Activated CD8-positive, alpha-beta T cell treated with anti-CD3 and anti-CD28 coated beads for 36 hours (primary cell): ENCODE measurements at regions of chr17 and their contacts with region 1.

Region 1: DNA sequence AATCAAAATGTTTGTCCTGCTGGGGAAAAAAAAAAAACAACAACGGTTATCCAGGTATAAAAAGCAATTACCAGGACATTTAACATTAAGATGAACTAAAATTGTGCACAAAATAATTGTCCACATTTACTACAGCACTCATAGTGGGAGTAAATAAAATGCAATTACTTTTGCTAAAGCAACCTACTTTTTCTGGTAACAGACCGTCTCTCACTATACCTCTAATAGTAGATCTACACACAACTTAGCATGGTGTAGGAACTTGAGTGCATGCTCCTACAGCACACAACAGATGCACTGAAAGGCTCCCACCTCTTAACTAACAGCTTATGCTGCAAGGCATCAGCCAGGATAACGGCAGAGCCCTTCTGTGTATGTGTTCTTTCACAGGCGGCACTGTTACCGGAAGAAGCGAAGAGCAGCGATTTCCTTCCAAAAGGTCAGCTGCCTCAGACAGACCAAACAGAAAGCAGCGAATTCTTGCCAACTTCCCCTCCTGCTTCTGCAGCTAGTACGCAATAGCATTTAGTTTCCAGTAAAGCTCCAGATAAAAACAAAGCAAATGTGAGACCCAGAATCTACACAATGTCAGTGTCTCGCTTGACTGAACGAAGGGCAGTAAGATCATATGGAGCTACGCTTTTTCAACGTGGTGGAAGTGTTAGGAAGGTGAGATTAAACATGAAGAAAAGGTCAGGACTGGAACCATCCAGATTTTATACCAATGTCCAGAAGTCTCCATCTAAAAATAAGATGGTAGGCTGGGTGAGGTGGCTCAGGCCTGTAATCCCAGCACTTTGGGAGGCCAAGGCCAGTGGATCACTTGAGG is 27.6 kb downstream of the STAT5B start:
- DNase-seq: peak; percentile 88
- ATAC-seq: peak; percentile 86
- H3K4me3 Mint-ChIP-seq: peak overlapping the region; percentile 77
- H3K27ac Mint-ChIP-seq: peak overlapping the region; percentile 98
- H3K4me1 Mint-ChIP-seq: peaks cover 69% of the 10 kb centered on the region
- H3K27me3 Mint-ChIP-seq: no peaks in the 10 kb centered on the region
- CTCF ChIP-seq: no peak

Region 2: DNA sequence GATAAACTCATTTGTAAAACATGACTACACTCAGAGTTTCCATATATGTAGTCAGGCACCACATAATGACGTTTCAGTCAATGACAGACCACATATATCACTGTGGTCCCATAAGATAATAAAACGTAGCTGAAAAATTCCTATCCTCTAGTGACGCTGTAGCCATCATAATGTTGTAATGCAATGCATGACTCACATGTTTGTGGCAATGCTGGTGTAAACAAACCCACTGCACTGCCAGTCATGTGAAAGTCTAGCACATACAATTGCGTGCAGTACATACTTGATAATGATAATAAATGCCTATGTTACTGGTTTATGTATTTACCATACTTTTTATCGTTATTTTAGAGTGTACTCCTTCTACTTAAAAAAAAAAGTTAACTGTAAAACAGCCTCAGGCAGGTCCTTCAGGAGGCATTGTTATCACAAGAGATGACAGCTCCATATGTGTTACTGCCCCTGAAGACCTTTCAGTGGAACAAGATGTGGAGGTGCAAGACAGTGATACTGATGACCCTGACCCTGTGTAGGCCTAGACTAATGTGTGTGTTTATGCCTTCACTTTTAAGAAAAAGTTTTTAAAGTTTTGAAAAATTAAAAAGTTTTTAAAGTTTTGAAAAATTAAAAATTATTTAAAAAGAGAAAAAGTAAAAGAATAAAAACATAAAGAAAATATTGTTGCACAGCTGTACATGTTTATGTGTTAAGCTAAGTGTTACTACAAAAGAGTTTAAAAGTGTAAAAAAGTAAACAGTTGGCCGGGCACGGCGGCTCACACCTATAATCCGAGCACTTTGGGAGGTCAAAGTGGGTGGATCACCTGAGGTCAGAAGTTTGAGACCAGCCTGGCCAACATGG is 18.6 kb after region 1 on chr17:
- CTCF ChIA-PET with region 1: interaction called, 25 read pairs
- POLR2A ChIA-PET with region 1: interaction called, 136 read pairs
- intact Hi-C with region 1: loop called (anchors 2 kb)
- DNase-seq: peak; percentile 74
- ATAC-seq: peak; percentile 85
- H3K4me3 Mint-ChIP-seq: peak overlapping the region; percentile 27
- H3K27ac Mint-ChIP-seq: peak overlapping the region; percentile 96
- H3K4me1 Mint-ChIP-seq: peaks cover 61% of the 10 kb centered on the region
- H3K27me3 Mint-ChIP-seq: no peaks in the 10 kb centered on the region
- CTCF ChIP-seq: no peak

Region 3: GRCh38 chr17:42276359-42276608 is 27.7 kb after region 1 on chr17 and contains the start of gene STAT5B:
- CTCF ChIA-PET with region 1: interaction called, 14 read pairs
- POLR2A ChIA-PET with region 1: interaction called, 136 read pairs
- intact Hi-C with region 1: no loop called
- DNase-seq: peak; percentile 64
- ATAC-seq: peak; percentile 65
- H3K4me3 Mint-ChIP-seq: peak within 1 kb of the TSS; percentile 97
- H3K27ac Mint-ChIP-seq: peak within 1 kb of the TSS; percentile 96
- H3K4me1 Mint-ChIP-seq: peaks cover 40% of the 10 kb centered on the region
- H3K27me3 Mint-ChIP-seq: no peaks in the 10 kb centered on the region
- CTCF ChIP-seq: no peak
- total RNA-seq, gene STAT5B: 128 to 129 TPM

Region 4: GRCh38 chr17:42287926-42288802 is 39.6 kb after region 1 on chr17 and contains the start of gene STAT5A:
- CTCF ChIA-PET with region 1: interaction called, 4 read pairs
- POLR2A ChIA-PET with region 1: interaction called, 49 read pairs
- intact Hi-C with region 1: no loop called
- DNase-seq: peak; percentile 90
- ATAC-seq: peak; percentile 76
- H3K4me3 Mint-ChIP-seq: peak within 1 kb of the TSS; percentile 84
- H3K27ac Mint-ChIP-seq: peak within 1 kb of the TSS; percentile 94
- H3K4me1 Mint-ChIP-seq: peaks cover 54% of the 10 kb centered on the region
- H3K27me3 Mint-ChIP-seq: no peaks in the 10 kb centered on the region
- CTCF ChIP-seq: no peak
- total RNA-seq, gene STAT5A: 163 to 190 TPM

Region 5: GRCh38 chr17:42329025-42329976 is 80.7 kb after region 1 on chr17:
- CTCF ChIA-PET with region 1: no interaction called
- POLR2A ChIA-PET with region 1: no interaction called
- intact Hi-C with region 1: no loop called
- DNase-seq: no peak
- ATAC-seq: no peak
- H3K4me3 Mint-ChIP-seq: no peak overlapping the region
- H3K27ac Mint-ChIP-seq: peak overlapping the region; percentile 63
- H3K4me1 Mint-ChIP-seq: peaks cover 19% of the 10 kb centered on the region
- H3K27me3 Mint-ChIP-seq: no peaks in the 10 kb centered on the region
- CTCF ChIP-seq: no peak